K562 (cell line): ENCODE measurements at regions of chr9 and their contacts with region 1.

Region 1: DNA sequence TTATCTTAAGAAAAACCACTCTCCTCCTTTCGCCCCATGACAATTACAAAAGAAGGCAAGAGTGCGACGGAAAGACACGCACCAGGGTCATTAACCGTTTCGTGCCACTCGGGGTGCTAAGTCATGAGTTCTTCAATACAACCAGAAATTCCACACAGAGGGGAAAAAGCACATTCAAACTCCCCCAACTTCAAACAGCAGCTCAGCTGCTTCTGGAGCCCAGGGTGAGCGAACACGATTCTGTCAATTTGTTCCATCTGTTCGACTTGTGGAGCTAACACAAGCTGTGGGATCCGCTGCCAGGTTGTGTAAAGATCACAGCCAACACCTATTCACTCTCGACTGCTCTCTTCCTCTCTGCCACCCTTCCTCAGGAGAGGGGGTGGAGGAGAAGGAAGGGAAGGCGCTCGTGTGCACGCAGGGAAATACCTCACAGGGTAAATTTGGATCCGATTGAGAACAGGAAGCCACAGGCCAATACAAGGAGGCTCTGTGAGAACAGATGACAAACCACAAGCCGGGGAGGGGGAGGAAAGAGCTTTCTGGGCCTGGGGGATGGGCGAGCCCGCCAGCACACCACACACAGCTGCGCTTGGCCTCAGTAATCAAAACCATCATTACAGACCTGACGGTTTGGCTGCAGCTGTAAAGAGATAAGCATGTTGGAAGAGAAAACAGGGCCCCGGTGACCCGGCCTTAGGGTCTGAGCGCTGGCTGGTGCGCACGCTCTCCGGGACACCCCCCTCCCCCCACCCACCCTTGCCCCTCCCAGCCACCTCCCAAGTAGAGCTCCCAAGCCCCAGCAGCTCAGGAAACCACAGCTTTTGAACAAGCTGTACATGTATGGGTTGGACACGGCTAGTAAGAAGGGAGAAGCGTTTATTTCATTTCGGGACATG is 54.3 kb downstream of the PTCH1 start:
- DNase-seq: peak; percentile 85 to 98 (median 90)
- ATAC-seq: peak; percentile 97
- H3K4me3 ChIP-seq: peak overlapping the region; percentile 30
- H3K27ac ChIP-seq: peak overlapping the region; percentile 94
- H3K4me1 ChIP-seq: peaks cover 24 to 28% of the 10 kb centered on the region in 2 experiments
- H3K27me3 ChIP-seq: no peaks in the 10 kb centered on the region
- CTCF ChIP-seq: 0 out of 6 replicates have a peak, but pooled peaks of 1 of the 3 experiments have one; percentile 2
- EP300 ChIP-seq: peak; percentile 99
- POLR2A ChIP-seq: peak; percentile 58
- RAD21 ChIP-seq: peak; percentile 28 to 51; a peak in 3 of 4 replicates

Region 2: GRCh38 chr9:95065224-95065623 is 397.3 kb before region 1 on chr9:
- CTCF ChIA-PET with region 1: no interaction called
- POLR2A ChIA-PET with region 1: no interaction called
- in situ Hi-C with region 1: no loop called
- intact Hi-C with region 1: no loop called
- DNase-seq: no peak
- ATAC-seq: no peak
- H3K4me3 ChIP-seq: no peak overlapping the region
- H3K27ac ChIP-seq: no peak overlapping the region
- H3K4me1 ChIP-seq: peaks cover 0 to 4% of the 10 kb centered on the region in 2 experiments; a peak in 1 of 5 replicates
- H3K27me3 ChIP-seq: no peaks in the 10 kb centered on the region
- CTCF ChIP-seq: no peak
- EP300 ChIP-seq: no peak
- POLR2A ChIP-seq: no peak
- RAD21 ChIP-seq: no peak

Region 3: DNA sequence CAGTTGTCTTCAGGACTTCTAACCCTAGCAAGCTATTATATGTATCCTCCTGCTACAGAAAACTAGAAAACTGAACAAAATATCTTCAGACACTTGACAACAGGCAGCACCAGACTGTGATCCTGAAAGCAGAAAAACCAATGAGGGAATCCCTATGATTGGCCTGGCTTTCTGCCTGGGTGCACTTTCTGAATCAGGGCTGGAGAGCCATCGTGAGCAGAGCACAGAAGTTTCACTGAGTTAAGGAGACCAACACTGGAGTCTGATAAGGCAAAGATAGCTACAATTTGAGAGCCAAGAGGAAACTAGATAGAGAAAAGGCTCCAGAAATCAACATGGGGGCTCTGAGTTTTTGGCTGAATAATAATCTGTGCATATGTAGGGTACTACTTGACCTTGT is 251.5 kb before region 1 on chr9:
- CTCF ChIA-PET with region 1: no interaction called
- POLR2A ChIA-PET with region 1: no interaction called
- in situ Hi-C with region 1: no loop called
- intact Hi-C with region 1: no loop called
- DNase-seq: peak in 1 of 4 experiments; percentile 26
- ATAC-seq: peak; percentile 50; the same call in 1 of the 3 replicates
- H3K4me3 ChIP-seq: no peak overlapping the region
- H3K27ac ChIP-seq: no peak overlapping the region
- H3K4me1 ChIP-seq: peaks cover 0 to 5% of the 10 kb centered on the region in 2 experiments; a peak in 2 of 5 replicates
- H3K27me3 ChIP-seq: no peaks in the 10 kb centered on the region
- CTCF ChIP-seq: no peak
- EP300 ChIP-seq: no peak
- POLR2A ChIP-seq: no peak
- RAD21 ChIP-seq: no peak

Region 4: DNA sequence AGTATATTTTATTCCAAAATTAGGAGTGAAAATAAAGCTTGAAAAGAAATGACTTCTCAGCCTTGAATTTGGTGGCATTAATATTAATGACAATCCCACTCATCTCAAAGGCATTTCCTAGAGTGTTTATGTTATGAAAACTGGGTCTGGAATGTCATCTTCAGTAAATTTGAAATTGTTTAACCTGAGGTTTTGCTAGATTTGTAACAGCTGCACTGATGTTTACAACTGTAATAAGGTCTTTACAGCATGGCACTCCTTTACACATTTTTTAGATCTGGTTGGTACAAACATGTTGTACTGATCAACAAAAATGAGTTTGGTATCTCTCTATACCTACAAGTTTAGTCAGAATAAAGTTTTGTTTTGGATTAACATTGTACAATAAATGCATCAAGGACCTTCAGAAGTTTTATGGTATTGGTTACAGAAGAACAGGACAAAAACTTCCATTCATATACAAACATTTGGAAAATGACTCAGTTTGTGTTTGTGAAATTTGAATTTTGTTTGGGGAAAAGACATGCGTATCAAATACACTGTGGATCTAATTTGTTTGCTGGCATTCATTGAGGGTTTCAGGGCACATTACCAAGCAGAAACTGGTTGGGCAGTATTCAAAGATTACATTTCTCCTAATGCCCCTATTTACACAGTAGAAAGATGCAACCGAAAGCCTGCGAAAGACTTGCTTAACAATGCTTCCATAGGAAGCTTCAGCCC is 156.6 kb before region 1 on chr9:
- CTCF ChIA-PET with region 1: no interaction called
- POLR2A ChIA-PET with region 1: no interaction called
- in situ Hi-C with region 1: no loop called
- intact Hi-C with region 1: no loop called
- DNase-seq: no peak
- ATAC-seq: no peak
- H3K4me3 ChIP-seq: no peak overlapping the region
- H3K27ac ChIP-seq: no peak overlapping the region
- H3K4me1 ChIP-seq: peaks cover 3 to 6% of the 10 kb centered on the region in 2 experiments; a peak in 3 of 5 replicates
- H3K27me3 ChIP-seq: no peaks in the 10 kb centered on the region
- CTCF ChIP-seq: no peak
- EP300 ChIP-seq: no peak
- POLR2A ChIP-seq: no peak
- RAD21 ChIP-seq: no peak

Region 5: GRCh38 chr9:95425910-95426551 is 36.5 kb before region 1 on chr9:
- CTCF ChIA-PET with region 1: no interaction called
- POLR2A ChIA-PET with region 1: no interaction called
- in situ Hi-C with region 1: no loop called
- intact Hi-C with region 1: loop called (anchors 2 kb)
- DNase-seq: peak; percentile 29 to 40 (median 32)
- ATAC-seq: peak; percentile 51
- H3K4me3 ChIP-seq: peak overlapping the region; percentile 55
- H3K27ac ChIP-seq: peak overlapping the region; percentile 85
- H3K4me1 ChIP-seq: peaks cover 0 to 6% of the 10 kb centered on the region in 2 experiments; a peak in 2 of 5 replicates
- H3K27me3 ChIP-seq: no peaks in the 10 kb centered on the region
- CTCF ChIP-seq: no peak
- EP300 ChIP-seq: no peak
- POLR2A ChIP-seq: no peak
- RAD21 ChIP-seq: no peak

Region 6: GRCh38 chr9:95434116-95435073 is 28.1 kb before region 1 on chr9:
- CTCF ChIA-PET with region 1: no interaction called
- POLR2A ChIA-PET with region 1: interaction called, 6 read pairs
- in situ Hi-C with region 1: no loop called
- intact Hi-C with region 1: loop called (anchors 2 kb)
- DNase-seq: peak; percentile 91 to 93 (median 91)
- ATAC-seq: peak; percentile 98
- H3K4me3 ChIP-seq: peak overlapping the region; percentile 18
- H3K27ac ChIP-seq: peak overlapping the region; percentile 47
- H3K4me1 ChIP-seq: peaks cover 11 to 17% of the 10 kb centered on the region in 2 experiments; a peak in 4 of 5 replicates
- H3K27me3 ChIP-seq: no peaks in the 10 kb centered on the region
- CTCF ChIP-seq: no peak
- EP300 ChIP-seq: peak; percentile 72
- POLR2A ChIP-seq: peak; percentile 53; the same call in 1 of the 2 replicates
- RAD21 ChIP-seq: no peak

Region 7: GRCh38 chr9:95450171-95451064 is 12.1 kb before region 1 on chr9:
- CTCF ChIA-PET with region 1: no interaction called
- POLR2A ChIA-PET with region 1: interaction called, 19 read pairs
- in situ Hi-C with region 1: no loop called
- intact Hi-C with region 1: no loop called
- DNase-seq: no peak
- ATAC-seq: no peak
- H3K4me3 ChIP-seq: no peak overlapping the region
- H3K27ac ChIP-seq: no peak overlapping the region
- H3K4me1 ChIP-seq: peaks cover 7 to 17% of the 10 kb centered on the region in 2 experiments; a peak in 3 of 5 replicates
- H3K27me3 ChIP-seq: no peaks in the 10 kb centered on the region
- CTCF ChIP-seq: no peak
- EP300 ChIP-seq: no peak
- POLR2A ChIP-seq: no peak
- RAD21 ChIP-seq: no peak

Region 8: GRCh38 chr9:95477441-95477840 is 14.9 kb after region 1 on chr9:
- CTCF ChIA-PET with region 1: no interaction called
- POLR2A ChIA-PET with region 1: interaction called, 10 read pairs
- in situ Hi-C with region 1: no loop called
- intact Hi-C with region 1: no loop called
- DNase-seq: no peak
- ATAC-seq: no peak
- H3K4me3 ChIP-seq: no peak overlapping the region
- H3K27ac ChIP-seq: no peak overlapping the region
- H3K4me1 ChIP-seq: no peaks in the 10 kb centered on the region
- H3K27me3 ChIP-seq: no peaks in the 10 kb centered on the region
- CTCF ChIP-seq: no peak
- EP300 ChIP-seq: no peak
- POLR2A ChIP-seq: no peak
- RAD21 ChIP-seq: no peak

Region 9: GRCh38 chr9:95505717-95506427 is 43.4 kb after region 1 on chr9:
- CTCF ChIA-PET with region 1: no interaction called
- POLR2A ChIA-PET with region 1: interaction called, 4 read pairs
- in situ Hi-C with region 1: no loop called
- intact Hi-C with region 1: loop called (anchors 2 kb)
- DNase-seq: peak; percentile 80 to 86 (median 83)
- ATAC-seq: peak; percentile 32
- H3K4me3 ChIP-seq: peak overlapping the region; percentile 84
- H3K27ac ChIP-seq: peak overlapping the region; percentile 88
- H3K4me1 ChIP-seq: peaks cover 19 to 42% of the 10 kb centered on the region in 2 experiments; a peak in 4 of 5 replicates
- H3K27me3 ChIP-seq: no peaks in the 10 kb centered on the region
- CTCF ChIP-seq: no peak
- EP300 ChIP-seq: no peak
- POLR2A ChIP-seq: peak; percentile 70
- RAD21 ChIP-seq: no peak